ENCODE measurements at regions of chr9 and their contacts with region 1.

Region 1: DNA sequence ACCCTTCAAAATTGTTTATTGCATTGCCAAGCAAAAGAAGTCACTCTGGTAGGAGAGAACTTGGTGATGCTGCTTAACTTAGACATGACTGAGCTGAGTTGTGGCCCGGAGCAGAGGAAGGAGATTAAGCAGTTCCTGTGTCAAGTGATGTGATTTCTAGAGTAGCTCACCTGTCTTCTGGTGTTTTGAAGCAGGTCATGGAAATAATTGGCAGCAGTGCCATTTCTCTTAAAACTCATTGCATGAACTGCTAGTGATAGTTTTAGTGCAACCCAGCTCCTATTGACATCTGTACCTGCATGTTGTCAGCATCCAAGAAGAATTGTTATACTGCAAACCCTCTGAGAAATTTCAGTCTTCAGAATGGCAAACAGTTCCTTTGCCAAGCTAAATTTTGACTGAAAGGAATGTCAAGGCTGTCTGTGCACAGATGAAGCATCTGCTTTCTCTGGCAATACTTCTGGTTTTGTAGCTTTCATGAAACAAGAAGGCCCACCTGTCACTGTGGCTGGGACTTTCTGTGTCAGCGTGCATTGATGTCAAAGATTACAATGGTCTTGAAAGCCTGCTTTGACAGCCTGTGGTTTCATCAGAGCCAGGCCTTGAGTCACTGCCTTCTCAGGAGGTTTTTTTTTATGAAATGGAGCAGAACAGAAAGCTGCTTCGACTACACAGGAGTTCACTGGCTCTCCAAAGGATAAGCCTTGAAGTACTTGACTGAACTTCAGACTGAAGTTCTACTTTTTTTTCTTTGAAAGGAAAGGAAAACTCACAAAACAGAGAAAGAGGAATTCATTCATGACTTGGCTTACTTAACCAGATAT is 90.6 kb downstream of the RALGPS1 start:
- DNase-seq: peak; percentile 73
- H3K4me3 Mint-ChIP-seq: no peak overlapping the region
- H3K27ac Mint-ChIP-seq: peak overlapping the region; percentile 3
- H3K4me1 Mint-ChIP-seq: peaks cover 22% of the 10 kb centered on the region
- H3K27me3 Mint-ChIP-seq: peaks cover 46% of the 10 kb centered on the region

Region 2: DNA sequence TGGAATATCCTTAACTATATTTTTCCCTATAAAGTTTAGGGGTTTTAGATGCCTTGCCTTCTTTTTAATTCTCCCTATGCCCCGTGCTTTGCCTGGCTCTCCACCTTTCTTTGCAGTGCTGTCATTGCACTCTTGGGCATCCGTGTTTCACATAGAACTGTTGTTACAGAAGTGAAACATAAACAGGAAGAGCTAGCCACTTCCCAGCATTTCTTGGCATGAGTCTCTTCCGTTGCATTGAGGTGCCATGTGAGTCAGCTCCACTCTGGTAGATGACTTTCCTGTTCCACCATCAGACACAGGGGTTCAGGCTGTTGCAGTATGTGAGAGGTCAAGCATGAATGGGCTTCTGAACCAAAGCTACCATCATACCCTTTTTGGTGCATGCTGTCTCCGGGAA is 43.9 kb after region 1 on chr9:
- intact Hi-C with region 1: loop called (anchors 5 kb)
- DNase-seq: peak; percentile 24
- H3K4me3 Mint-ChIP-seq: peak overlapping the region; percentile 31
- H3K27ac Mint-ChIP-seq: no peak overlapping the region
- H3K4me1 Mint-ChIP-seq: peaks cover 24% of the 10 kb centered on the region
- H3K27me3 Mint-ChIP-seq: peaks cover 16% of the 10 kb centered on the region

Region 3: DNA sequence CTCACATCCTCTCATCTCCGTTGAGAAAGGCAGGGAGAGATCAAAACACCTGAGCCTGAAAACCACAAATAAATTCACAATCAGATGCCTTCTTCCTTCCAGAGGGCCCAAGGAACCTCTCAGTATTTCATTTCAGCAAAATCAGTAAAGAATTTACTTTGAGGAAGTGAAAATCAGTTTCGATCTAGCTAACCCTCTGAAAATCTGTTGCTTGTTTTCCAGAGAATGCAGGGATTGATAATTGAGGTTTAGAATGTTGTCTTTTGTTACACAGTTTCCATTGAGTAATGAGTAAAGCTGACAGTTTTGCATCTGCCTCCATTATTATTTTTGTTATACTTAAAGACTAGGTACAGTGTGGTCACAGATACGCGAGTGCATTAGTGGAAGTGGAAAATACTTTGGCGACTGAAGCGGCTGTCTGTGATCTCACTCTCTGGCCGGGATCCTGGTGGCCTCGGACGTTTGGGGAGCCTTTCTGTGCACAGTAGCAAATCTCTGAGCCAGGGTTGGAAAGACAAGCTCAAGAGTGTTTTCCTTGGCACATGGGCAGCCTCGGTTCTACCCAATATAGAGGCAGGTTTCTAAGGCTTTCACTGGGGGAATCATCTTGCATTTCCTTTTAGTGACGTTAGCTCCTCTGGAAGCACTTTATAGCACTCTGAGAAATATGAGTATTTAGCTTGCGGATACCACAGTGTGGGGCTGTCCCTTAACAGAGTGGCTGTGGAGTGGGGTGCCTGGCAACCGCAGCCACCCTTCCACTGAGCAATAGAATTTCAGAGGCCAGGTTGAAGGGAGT is 149.4 kb after region 1 on chr9:
- intact Hi-C with region 1: loop called (anchors 2 kb)
- DNase-seq: no peak
- H3K4me3 Mint-ChIP-seq: no peak overlapping the region
- H3K27ac Mint-ChIP-seq: no peak overlapping the region
- H3K4me1 Mint-ChIP-seq: peaks cover 14% of the 10 kb centered on the region
- H3K27me3 Mint-ChIP-seq: peaks cover 42% of the 10 kb centered on the region